ENCODE measurements at regions of chr14 and their contacts with region 1.

Region 1: GRCh38 chr14:73746520-73747378 is 32.6 kb upstream of the PNMA1 start:
- DNase-seq: no peak
- H3K4me3 ChIP-seq: no peak overlapping the region
- H3K27ac ChIP-seq: peak overlapping the region; percentile 89
- H3K4me1 ChIP-seq: peaks cover 93% of the 10 kb centered on the region
- H3K27me3 ChIP-seq: no peaks in the 10 kb centered on the region
- CTCF ChIP-seq: peak in 2 of 3 experiments; percentile 56 to 60

Region 2: DNA sequence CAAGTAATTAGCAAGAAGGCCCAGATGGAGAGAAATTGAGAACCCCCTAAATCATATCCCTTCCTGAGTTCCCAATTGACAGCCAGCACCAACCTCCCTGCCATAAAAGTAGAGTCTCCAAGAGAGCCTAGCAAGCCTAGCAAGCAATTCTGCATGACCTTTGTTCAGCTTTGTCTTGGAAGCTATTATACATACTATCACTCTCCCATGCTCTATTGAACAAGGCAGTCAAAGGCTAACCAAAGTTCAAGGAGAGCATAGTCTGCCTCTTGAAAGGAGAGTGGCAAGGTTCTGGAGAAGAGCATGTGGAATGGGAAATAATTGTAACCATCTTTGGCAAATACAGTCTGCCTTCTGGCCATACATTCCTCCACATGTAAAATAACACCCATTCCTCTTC is 147.2 kb before region 1 on chr14:
- dilution Hi-C with region 1: no loop called
- DNase-seq: no peak
- H3K4me3 ChIP-seq: no peak overlapping the region
- H3K27ac ChIP-seq: no peak overlapping the region
- H3K4me1 ChIP-seq: peaks cover 12% of the 10 kb centered on the region
- H3K27me3 ChIP-seq: no peaks in the 10 kb centered on the region
- CTCF ChIP-seq: no peak

Region 3: GRCh38 chr14:73784181-73784987 is 37.6 kb after region 1 on chr14:
- dilution Hi-C with region 1: loop called (anchors 5 kb)
- DNase-seq: no peak
- H3K4me3 ChIP-seq: peak overlapping the region in 1 of 3 experiments; percentile 86
- H3K27ac ChIP-seq: peak overlapping the region; percentile 95
- H3K4me1 ChIP-seq: peaks cover 40% of the 10 kb centered on the region
- H3K27me3 ChIP-seq: no peaks in the 10 kb centered on the region
- CTCF ChIP-seq: no peak

Region 4: GRCh38 chr14:74038015-74038859 is 291.5 kb after region 1 on chr14:
- dilution Hi-C with region 1: no loop called
- DNase-seq: peak; percentile 33
- H3K4me3 ChIP-seq: no peak overlapping the region
- H3K27ac ChIP-seq: no peak overlapping the region
- H3K4me1 ChIP-seq: no peaks in the 10 kb centered on the region
- H3K27me3 ChIP-seq: no peaks in the 10 kb centered on the region
- CTCF ChIP-seq: peak in 2 of 3 experiments; percentile 29 to 51

Region 5: DNA sequence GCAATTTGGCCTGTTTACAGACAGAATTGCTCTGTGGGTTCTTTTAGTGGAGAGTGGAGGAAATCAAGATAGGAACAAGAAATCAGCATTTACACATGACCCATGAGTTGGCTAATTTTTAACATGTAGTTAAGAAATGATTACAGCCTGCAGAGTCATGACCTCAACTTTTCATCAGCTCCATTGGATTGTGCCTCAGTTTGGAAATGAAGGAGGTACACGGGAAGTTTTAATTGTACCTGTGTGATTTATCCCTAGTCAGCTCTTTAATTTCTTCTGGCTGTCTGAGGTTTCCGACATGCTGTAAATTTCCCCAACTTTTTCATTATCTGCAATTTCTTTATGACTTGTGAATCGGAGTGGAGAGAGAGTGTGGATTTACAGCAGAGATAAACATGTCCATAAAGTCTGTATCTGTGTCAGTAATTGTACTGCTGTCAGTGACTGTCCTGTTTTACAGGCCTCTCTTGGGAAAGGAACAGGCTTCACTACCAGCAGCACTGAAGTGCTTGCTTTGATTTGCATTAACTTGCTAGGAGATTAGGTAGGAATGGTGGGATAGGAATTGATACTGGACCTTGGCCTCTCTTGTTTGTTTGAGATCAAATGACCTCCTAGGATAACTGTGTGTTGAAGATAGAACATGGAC is 387.2 kb after region 1 on chr14:
- dilution Hi-C with region 1: no loop called
- DNase-seq: no peak
- H3K4me3 ChIP-seq: no peak overlapping the region
- H3K27ac ChIP-seq: no peak overlapping the region
- H3K4me1 ChIP-seq: no peaks in the 10 kb centered on the region
- H3K27me3 ChIP-seq: no peaks in the 10 kb centered on the region
- CTCF ChIP-seq: no peak

Region 6: GRCh38 chr14:74963705-74964271 is 1217.0 kb after region 1 on chr14:
- dilution Hi-C with region 1: no loop called
- DNase-seq: no peak
- H3K4me3 ChIP-seq: no peak overlapping the region
- H3K27ac ChIP-seq: peak overlapping the region; percentile 84
- H3K4me1 ChIP-seq: peaks cover 61% of the 10 kb centered on the region
- H3K27me3 ChIP-seq: no peaks in the 10 kb centered on the region
- CTCF ChIP-seq: no peak

Measured in keratinocyte (primary cell).